ENCODE measurements at regions of chr19 and their contacts with region 1.

Region 1: DNA sequence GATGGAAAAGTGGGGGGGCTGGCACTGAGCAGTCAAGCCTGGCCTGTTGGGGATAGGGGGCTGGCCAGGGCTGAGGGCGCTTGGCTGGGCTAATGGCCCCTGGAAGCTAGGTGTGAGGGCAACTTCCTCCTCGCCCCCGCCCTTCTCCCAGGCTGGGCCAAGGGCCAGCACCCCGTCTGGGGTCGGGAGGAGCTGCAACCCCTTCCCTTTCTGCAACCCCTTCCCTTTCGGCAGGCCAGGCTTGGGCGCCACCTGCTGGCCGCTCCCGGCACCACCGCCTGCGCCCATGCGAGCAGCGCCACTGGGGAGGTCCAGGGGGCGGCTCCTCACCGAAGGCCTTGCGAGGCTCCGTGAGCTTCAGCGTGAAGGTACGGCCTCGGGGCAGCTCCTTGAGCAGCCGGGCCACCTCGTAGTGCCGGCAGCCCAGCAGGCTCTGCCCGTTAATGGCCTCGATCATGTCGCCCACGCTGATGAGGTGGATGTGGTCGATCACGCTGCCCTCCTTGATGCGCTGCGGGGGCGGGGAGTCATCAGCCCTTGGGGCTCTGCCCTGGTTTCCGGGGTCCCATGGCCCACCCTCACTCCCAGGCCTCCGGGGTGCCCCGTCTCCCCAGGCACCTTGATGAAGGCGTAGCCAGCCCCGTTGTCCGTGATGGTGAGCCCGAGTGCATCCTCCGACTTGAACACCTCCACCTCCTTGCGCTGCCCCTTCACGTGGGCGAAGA is 5.0 kb upstream of the PTGER1 start:
- DNase-seq: peak; percentile 58 to 78 (median 62)
- H3K4me3 ChIP-seq: no peak overlapping the region
- H3K4me3 Mint-ChIP-seq: peak overlapping the region in 2 of 7 donors; percentile 49 to 63
- H3K27ac ChIP-seq: no peak overlapping the region
- H3K27ac Mint-ChIP-seq: peak overlapping the region in 1 of 8 donors; percentile 66
- H3K4me1 ChIP-seq: peaks cover 10% of the 10 kb centered on the region
- H3K4me1 Mint-ChIP-seq: peaks cover 12 to 23% (median 16%) of the 10 kb centered on the region in 3 donors
- H3K27me3 ChIP-seq: peaks cover under 1% of the 10 kb centered on the region
- H3K27me3 Mint-ChIP-seq: peaks cover 9 to 10% of the 10 kb centered on the region in 2 donors

Region 2: GRCh38 chr19:14405758-14406644 is 74.1 kb before region 1 on chr19:
- CTCF ChIA-PET with region 1: interaction called, 10 read pairs
- POLR2A ChIA-PET with region 1: no interaction called
- DNase-seq: peak; percentile 86 to 91 (median 88)
- H3K4me3 ChIP-seq: no peak overlapping the region
- H3K4me3 Mint-ChIP-seq: peak overlapping the region in 3 of 7 donors; percentile 19 to 83 (median 77)
- H3K27ac ChIP-seq: no peak overlapping the region
- H3K27ac Mint-ChIP-seq: peak overlapping the region in 7 of 8 donors; percentile 59 to 97 (median 87)
- H3K4me1 ChIP-seq: peaks cover 40% of the 10 kb centered on the region
- H3K4me1 Mint-ChIP-seq: peaks cover 11 to 55% (median 26%) of the 10 kb centered on the region in 3 donors
- H3K27me3 ChIP-seq: no peaks in the 10 kb centered on the region
- H3K27me3 Mint-ChIP-seq: peaks cover 0 to 13% of the 10 kb centered on the region in 2 donors

Region 3: GRCh38 chr19:14419106-14419813 is 60.9 kb before region 1 on chr19 and contains the start of gene DDX39A:
- CTCF ChIA-PET with region 1: interaction called, 11 read pairs
- POLR2A ChIA-PET with region 1: interaction called, 7 read pairs
- DNase-seq: peak; percentile 95 to 99 (median 97)
- H3K4me3 ChIP-seq: peak within 1 kb of the TSS; percentile 72
- H3K4me3 Mint-ChIP-seq: peak within 1 kb of the TSS; percentile 86 to 97 (median 93)
- H3K27ac ChIP-seq: peak within 1 kb of the TSS; percentile 94
- H3K27ac Mint-ChIP-seq: peak within 1 kb of the TSS; percentile 91 to 98 (median 98)
- H3K4me1 ChIP-seq: peaks cover 39% of the 10 kb centered on the region
- H3K4me1 Mint-ChIP-seq: peaks cover 34 to 49% (median 47%) of the 10 kb centered on the region in 3 donors
- H3K27me3 ChIP-seq: no peaks in the 10 kb centered on the region
- H3K27me3 Mint-ChIP-seq: peaks cover 0 to 9% of the 10 kb centered on the region in 2 donors
- total RNA-seq, gene DDX39A: 298 to 302 TPM

Region 4: DNA sequence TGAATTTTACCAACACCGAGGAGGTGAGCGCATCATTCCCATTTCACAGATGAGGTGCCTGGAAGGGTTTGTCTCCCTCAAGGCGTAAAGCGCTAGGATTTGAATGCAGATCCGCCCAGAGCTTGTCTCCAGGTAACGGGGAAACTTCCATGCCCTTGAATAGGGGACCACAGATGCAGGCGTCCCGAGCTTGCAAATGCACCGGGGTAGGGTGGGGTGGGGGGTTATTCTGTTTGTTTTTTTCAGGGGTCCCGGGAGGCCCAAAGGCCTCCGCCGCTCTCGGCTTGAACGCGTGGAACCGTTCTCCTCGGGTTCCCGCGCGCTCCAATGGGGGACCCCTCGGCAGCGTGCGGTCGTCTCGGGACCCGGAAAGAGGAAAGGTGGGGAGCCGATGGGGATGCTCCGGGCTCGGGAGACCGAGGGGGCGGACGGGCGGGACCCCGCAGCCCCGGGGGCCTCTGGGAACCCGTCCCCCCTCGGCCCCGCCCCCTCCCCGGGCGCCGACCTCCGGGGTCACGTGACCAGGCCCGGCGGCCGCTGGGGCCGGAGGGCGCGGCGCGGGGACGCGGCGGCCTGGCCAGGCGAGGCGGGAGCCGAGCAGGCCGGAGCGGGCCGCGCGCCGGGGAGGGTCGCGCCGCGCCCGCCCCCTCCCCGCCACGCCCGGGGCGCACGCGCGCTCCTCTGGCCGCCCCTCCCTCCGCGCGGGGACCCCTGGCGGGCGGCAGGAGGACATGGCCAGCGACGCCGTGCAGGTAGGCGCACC is 47.2 kb before region 1 on chr19 and contains the start of gene PKN1:
- CTCF ChIA-PET with region 1: interaction called, 17 read pairs
- POLR2A ChIA-PET with region 1: no interaction called
- DNase-seq: peak in 4 of 5 donors; percentile 32 to 71 (median 52)
- H3K4me3 ChIP-seq: peak within 1 kb of the TSS; percentile 59
- H3K4me3 Mint-ChIP-seq: peak within 1 kb of the TSS; percentile 82 to 95 (median 87)
- H3K27ac ChIP-seq: peak within 1 kb of the TSS; percentile 74
- H3K27ac Mint-ChIP-seq: peak within 1 kb of the TSS; percentile 84 to 97 (median 92)
- H3K4me1 ChIP-seq: peaks cover 35% of the 10 kb centered on the region
- H3K4me1 Mint-ChIP-seq: peaks cover 29 to 47% (median 41%) of the 10 kb centered on the region in 3 donors
- H3K27me3 ChIP-seq: no peaks in the 10 kb centered on the region
- H3K27me3 Mint-ChIP-seq: peaks cover 0 to 1% of the 10 kb centered on the region in 2 donors
- total RNA-seq, gene PKN1: 177 to 205 TPM

Region 5: GRCh38 chr19:14496028-14496833 is 16.1 kb after region 1 on chr19 and contains the start of gene GIPC1:
- CTCF ChIA-PET with region 1: interaction called, 14 read pairs
- POLR2A ChIA-PET with region 1: no interaction called
- DNase-seq: peak; percentile 74 to 89 (median 82)
- H3K4me3 ChIP-seq: peak within 1 kb of the TSS; percentile 71
- H3K4me3 Mint-ChIP-seq: peak within 1 kb of the TSS; percentile 75 to 93 (median 88)
- H3K27ac ChIP-seq: peak within 1 kb of the TSS; percentile 51
- H3K27ac Mint-ChIP-seq: peak within 1 kb of the TSS; percentile 67 to 94 (median 84)
- H3K4me1 ChIP-seq: peaks cover 24% of the 10 kb centered on the region
- H3K4me1 Mint-ChIP-seq: peaks cover 19 to 34% (median 33%) of the 10 kb centered on the region in 3 donors
- H3K27me3 ChIP-seq: no peaks in the 10 kb centered on the region
- H3K27me3 Mint-ChIP-seq: no peaks in the 10 kb centered on the region
- total RNA-seq, gene GIPC1: 32.7 to 36.7 TPM

Measured in CD8-positive, alpha-beta memory T cell (primary cell).